ENCODE measurements at regions of chr3 and their contacts with region 1.

Region 1: DNA sequence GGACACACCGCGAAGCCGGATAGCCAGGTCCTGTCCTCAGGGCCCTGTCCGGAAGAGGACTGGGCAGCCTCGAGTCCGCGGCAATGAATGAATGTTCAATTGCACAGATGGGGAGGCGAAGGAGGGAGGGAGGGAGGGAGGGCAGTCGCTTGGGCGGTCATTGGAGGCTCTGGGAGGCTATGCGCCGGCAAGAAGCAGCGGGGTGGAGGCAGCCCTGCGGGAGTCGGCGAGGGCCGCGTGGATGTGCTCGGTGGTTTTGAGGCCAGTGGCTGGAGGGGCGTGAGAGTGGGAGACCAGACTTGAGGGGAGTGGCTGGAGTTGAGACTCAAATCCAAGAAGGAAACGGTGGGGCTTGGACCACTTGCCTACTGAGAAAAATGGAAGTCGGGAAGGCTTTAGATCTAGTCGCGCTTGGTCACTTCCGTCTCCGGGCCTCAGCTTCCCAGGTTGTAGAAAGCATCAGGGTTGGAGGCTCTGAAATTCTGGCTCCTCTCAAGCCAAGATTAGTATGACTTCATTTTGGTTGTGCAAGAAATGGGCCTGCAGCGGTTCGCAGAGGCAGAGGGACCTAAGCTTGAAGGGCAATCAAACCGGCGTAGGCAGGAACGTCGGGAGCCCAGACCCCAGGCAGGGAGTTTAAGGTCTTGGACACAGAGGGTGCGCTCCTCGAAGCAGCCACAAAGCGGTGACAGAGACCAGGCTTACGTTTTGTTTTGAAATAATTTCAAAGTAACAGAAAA is 21.1 kb upstream of the PLXND1 start:
- DNase-seq: peak; percentile 77
- H3K4me3 ChIP-seq: no peak overlapping the region; a peak in 1 of 4 replicates
- H3K27ac ChIP-seq: no peak overlapping the region
- H3K4me1 ChIP-seq: no peaks in the 10 kb centered on the region; a peak in 1 of 4 replicates
- H3K27me3 ChIP-seq: no peaks in the 10 kb centered on the region
- CTCF ChIP-seq: peak; percentile 67
- EP300 ChIP-seq: no peak
- RAD21 ChIP-seq: peak; percentile 83

Region 2: DNA sequence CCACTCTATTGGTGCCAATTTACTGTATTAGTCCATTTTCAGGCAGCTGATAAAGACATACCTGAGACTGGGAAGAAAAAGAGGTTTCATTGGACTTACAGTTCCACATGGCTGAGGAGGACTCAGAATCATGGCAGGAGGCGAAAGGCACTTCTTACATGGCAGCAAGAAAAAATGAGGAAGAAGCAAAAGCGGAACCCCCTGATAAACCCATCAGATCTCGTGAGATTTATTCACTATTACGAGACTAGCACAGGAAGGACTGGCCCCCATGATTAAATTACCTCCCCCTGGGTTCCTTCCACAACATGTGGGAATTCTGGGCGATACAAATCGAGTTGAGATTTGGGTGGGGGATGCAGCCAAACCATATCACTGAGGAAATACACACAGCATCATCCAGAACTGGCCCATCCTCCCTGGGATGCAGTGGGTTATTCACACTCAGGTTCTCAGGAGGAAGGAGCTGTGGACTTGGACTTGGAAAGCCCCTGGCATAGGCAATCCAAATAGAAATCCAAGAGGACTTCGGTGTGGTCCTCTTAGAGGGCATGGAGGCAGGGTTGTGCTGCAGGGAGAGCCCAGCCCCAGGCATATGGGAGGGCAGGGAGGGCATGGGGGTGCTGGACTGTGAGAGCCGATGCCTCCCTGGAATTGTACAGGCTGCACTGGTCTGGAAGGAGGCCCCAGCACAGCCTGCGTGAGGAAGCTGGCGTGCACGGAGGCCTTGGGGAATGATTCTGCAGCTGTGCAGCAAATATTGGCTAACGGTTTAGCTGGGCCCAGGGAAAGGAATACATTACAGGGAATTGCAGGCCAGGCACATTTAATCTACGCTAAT is 262.1 kb before region 1 on chr3:
- CTCF ChIA-PET with region 1: no interaction called
- POLR2A ChIA-PET with region 1: no interaction called
- DNase-seq: no peak
- H3K4me3 ChIP-seq: no peak overlapping the region
- H3K27ac ChIP-seq: peak overlapping the region in 1 of 2 experiments; percentile 20; a peak in 1 of 4 replicates
- H3K4me1 ChIP-seq: peaks cover 0 to 15% of the 10 kb centered on the region in 2 experiments; a peak in 1 of 4 replicates
- H3K27me3 ChIP-seq: no peaks in the 10 kb centered on the region
- CTCF ChIP-seq: no peak
- EP300 ChIP-seq: no peak
- RAD21 ChIP-seq: no peak

Region 3: DNA sequence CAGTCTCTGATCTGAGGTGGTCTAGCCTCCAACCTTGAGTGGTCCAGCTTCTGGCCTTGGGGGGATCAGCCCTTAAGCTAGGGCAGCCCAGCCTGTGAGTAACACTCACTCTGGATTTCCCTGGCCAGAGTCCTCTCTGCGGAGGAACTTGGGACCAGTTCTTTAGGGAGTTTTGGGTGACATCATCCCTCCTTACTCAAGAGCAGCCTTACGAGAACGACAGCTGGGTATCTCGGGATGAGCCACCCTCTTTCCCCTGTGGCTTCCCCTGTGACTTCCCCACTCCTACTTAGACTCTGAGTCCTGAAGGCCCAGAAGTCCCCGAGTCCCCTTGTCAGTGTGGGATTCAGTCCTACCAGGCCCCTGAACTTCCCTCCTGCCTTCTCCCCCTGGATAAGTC is 10.9 kb before region 1 on chr3:
- CTCF ChIA-PET with region 1: interaction called, 11 read pairs
- POLR2A ChIA-PET with region 1: no interaction called
- DNase-seq: no peak
- H3K4me3 ChIP-seq: no peak overlapping the region
- H3K27ac ChIP-seq: no peak overlapping the region
- H3K4me1 ChIP-seq: peaks cover 0 to 5% of the 10 kb centered on the region in 2 experiments; a peak in 1 of 4 replicates
- H3K27me3 ChIP-seq: no peaks in the 10 kb centered on the region
- CTCF ChIP-seq: no peak
- EP300 ChIP-seq: no peak
- RAD21 ChIP-seq: no peak

Measured in SK-N-SH (cell line).